CD8-positive, alpha-beta T cell (primary cell): ENCODE measurements at regions of chr10 and their contacts with region 1.

Region 1: GRCh38 chr10:78972947-78973900 is 95.5 kb upstream of the ZMIZ1 start:
- DNase-seq: peak; percentile 11 to 89 (median 68)
- ATAC-seq: peak; percentile 69
- H3K4me3 ChIP-seq: peak overlapping the region; percentile 39 to 54
- H3K4me3 Mint-ChIP-seq: peak overlapping the region; percentile 83
- H3K27ac ChIP-seq: peak overlapping the region in 1 of 2 experiments; percentile 19
- H3K27ac Mint-ChIP-seq: peak overlapping the region; percentile 80
- H3K4me1 ChIP-seq: peaks cover 14% of the 10 kb centered on the region
- H3K4me1 Mint-ChIP-seq: peaks cover 14% of the 10 kb centered on the region
- H3K27me3 ChIP-seq: no peaks in the 10 kb centered on the region
- H3K27me3 Mint-ChIP-seq: no peaks in the 10 kb centered on the region
- CTCF ChIP-seq: no peak

Region 2: DNA sequence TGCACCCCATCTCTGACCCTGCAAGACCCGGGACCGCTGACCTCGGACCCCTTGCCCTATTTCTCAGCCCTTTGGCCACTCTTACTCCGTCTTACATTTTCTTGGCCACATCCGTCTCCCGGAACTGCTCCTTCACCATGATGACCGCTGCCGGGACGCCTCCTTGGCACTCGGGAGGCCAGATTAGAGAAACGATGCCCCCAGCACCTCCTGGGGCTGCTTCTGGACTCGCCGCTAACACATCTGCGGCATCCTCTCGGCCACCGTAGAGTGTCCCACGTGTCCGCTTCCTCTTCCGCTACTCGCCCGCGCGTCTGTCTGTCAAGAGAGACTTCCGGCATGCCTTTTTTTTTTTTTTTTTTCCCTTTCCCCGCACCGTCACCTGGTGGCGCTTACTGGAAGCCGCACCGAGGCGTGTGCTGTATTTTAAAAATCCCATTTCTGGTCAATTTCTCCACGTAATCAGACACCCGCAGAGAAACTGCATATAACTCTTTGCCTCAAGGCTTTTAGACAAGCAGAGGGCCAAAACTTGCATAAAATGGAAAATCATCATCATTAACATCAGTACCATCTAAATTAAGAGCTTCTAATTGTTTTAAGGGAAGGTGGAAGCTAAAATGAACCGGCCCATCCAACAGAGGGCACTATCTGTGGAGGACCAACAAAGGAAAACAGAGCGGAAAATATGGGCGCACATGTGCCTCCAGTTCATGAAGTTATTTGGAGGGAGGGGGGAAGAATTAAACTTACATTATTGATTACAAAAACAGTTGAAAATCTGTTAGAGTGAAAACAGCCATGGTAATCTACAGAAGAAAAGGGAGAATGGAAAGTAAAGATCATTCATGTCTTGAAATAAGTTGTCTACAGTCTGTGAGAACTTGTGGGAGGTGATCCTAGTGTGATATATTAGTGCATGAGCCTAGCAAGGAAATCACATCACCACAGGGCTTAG is 943.7 kb before region 1 on chr10 and contains the start of gene POLR3A:
- CTCF ChIA-PET with region 1: no interaction called
- POLR2A ChIA-PET with region 1: no interaction called
- intact Hi-C with region 1: loop called in 1 of 2 experiments (anchors 5 kb)
- DNase-seq: peak; percentile 81 to 97 (median 90)
- ATAC-seq: peak; percentile 56
- H3K4me3 ChIP-seq: peak within 1 kb of the TSS; percentile 92 to 99
- H3K4me3 Mint-ChIP-seq: peak within 1 kb of the TSS; percentile 99
- H3K27ac ChIP-seq: peak within 1 kb of the TSS; percentile 55 to 70
- H3K27ac Mint-ChIP-seq: peak within 1 kb of the TSS; percentile 95
- H3K4me1 ChIP-seq: peaks cover 17% of the 10 kb centered on the region
- H3K4me1 Mint-ChIP-seq: peaks cover 40% of the 10 kb centered on the region
- H3K27me3 ChIP-seq: no peaks in the 10 kb centered on the region
- H3K27me3 Mint-ChIP-seq: no peaks in the 10 kb centered on the region
- CTCF ChIP-seq: peak; percentile 75
- total RNA-seq, gene POLR3A: 5.9 to 7.0 TPM

Region 3: GRCh38 chr10:78042058-78042751 is 931.0 kb before region 1 on chr10:
- CTCF ChIA-PET with region 1: no interaction called
- POLR2A ChIA-PET with region 1: no interaction called
- intact Hi-C with region 1: loop called in 1 of 2 experiments (anchors 5 kb)
- DNase-seq: no peak
- ATAC-seq: no peak
- H3K4me3 ChIP-seq: no peak overlapping the region
- H3K4me3 Mint-ChIP-seq: no peak overlapping the region
- H3K27ac ChIP-seq: no peak overlapping the region
- H3K27ac Mint-ChIP-seq: peak overlapping the region; percentile 56
- H3K4me1 ChIP-seq: peaks cover 22% of the 10 kb centered on the region
- H3K4me1 Mint-ChIP-seq: peaks cover 47% of the 10 kb centered on the region
- H3K27me3 ChIP-seq: no peaks in the 10 kb centered on the region
- H3K27me3 Mint-ChIP-seq: no peaks in the 10 kb centered on the region
- CTCF ChIP-seq: no peak

Region 4: DNA sequence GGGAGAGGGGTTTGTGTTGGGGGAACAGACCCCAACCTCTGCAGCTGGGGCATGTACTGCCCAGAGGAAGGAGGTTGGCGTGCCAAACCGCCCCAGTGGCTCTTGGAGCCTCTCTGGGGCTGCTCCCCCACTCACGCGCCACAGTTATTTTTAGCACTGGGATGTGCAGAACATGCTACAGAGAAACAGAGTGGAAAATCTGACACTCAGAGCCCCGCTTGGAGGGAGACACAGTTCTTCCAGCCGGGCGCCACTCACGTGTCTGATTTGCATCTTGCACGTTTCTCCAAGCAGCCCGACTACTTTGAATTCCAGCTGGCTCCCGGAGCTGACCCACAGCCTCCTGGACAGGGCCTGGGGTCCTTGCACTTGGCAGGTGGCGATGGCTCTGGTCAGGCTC is 757.6 kb before region 1 on chr10:
- CTCF ChIA-PET with region 1: no interaction called
- POLR2A ChIA-PET with region 1: no interaction called
- intact Hi-C with region 1: no loop called
- DNase-seq: no peak
- ATAC-seq: no peak
- H3K4me3 ChIP-seq: no peak overlapping the region
- H3K4me3 Mint-ChIP-seq: no peak overlapping the region
- H3K27ac ChIP-seq: no peak overlapping the region
- H3K27ac Mint-ChIP-seq: no peak overlapping the region
- H3K4me1 ChIP-seq: no peaks in the 10 kb centered on the region
- H3K4me1 Mint-ChIP-seq: no peaks in the 10 kb centered on the region
- H3K27me3 ChIP-seq: no peaks in the 10 kb centered on the region
- H3K27me3 Mint-ChIP-seq: peaks cover 24% of the 10 kb centered on the region
- CTCF ChIP-seq: no peak

Region 5: GRCh38 chr10:78302989-78303854 is 670.0 kb before region 1 on chr10:
- CTCF ChIA-PET with region 1: no interaction called
- POLR2A ChIA-PET with region 1: no interaction called
- intact Hi-C with region 1: loop called in 1 of 2 experiments (anchors 1 kb)
- DNase-seq: peak; percentile 94 to 99 (median 96)
- ATAC-seq: peak; percentile 92
- H3K4me3 ChIP-seq: peak overlapping the region; percentile 73 to 82
- H3K4me3 Mint-ChIP-seq: peak overlapping the region; percentile 97
- H3K27ac ChIP-seq: peak overlapping the region; percentile 76 to 92
- H3K27ac Mint-ChIP-seq: peak overlapping the region; percentile 97
- H3K4me1 ChIP-seq: peaks cover 17% of the 10 kb centered on the region
- H3K4me1 Mint-ChIP-seq: peaks cover 20% of the 10 kb centered on the region
- H3K27me3 ChIP-seq: no peaks in the 10 kb centered on the region
- H3K27me3 Mint-ChIP-seq: no peaks in the 10 kb centered on the region
- CTCF ChIP-seq: peak; percentile 79

Region 6: DNA sequence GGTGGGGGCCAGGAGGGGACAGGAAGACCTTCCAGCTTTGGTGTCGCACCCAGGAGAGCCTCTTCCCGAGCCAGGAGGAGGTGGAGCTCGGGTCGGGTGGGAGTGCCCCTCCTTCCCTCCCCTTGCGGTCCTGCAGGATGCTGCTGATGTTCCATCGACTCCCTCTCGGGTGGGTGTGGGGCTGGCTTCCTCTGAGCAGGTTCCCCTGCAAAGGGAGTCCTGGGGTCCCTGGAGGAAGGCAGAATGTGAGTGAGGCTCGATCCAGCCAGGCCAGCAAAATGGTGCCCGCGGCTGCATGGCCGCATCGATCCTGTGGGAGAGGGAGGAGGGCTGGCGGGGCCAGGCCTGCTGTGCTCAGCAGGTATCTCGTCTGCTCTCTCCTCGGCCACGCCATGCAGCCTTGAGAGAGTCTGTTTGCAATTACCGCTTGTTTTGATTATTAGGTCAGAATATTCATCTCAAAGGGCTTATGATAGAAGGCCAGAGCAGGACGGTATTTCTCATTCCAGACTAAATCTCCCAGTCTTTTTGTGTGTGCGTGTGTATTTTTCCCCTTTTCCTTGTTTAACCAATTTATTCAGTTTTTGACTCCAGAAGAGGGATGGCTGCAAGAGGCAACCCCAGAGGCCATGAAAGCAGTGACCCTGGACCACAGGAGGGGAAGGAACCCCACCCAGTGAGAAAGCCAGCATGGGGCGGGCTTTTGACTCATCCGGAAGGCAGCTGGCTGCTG is 41.7 kb before region 1 on chr10:
- CTCF ChIA-PET with region 1: no interaction called
- POLR2A ChIA-PET with region 1: no interaction called
- intact Hi-C with region 1: no loop called
- DNase-seq: no peak
- ATAC-seq: no peak
- H3K4me3 ChIP-seq: no peak overlapping the region
- H3K4me3 Mint-ChIP-seq: no peak overlapping the region
- H3K27ac ChIP-seq: no peak overlapping the region
- H3K27ac Mint-ChIP-seq: no peak overlapping the region
- H3K4me1 ChIP-seq: no peaks in the 10 kb centered on the region
- H3K4me1 Mint-ChIP-seq: no peaks in the 10 kb centered on the region
- H3K27me3 ChIP-seq: no peaks in the 10 kb centered on the region
- H3K27me3 Mint-ChIP-seq: no peaks in the 10 kb centered on the region
- CTCF ChIP-seq: no peak

Region 7: GRCh38 chr10:79001082-79001885 is 28.1 kb after region 1 on chr10:
- CTCF ChIA-PET with region 1: no interaction called
- POLR2A ChIA-PET with region 1: no interaction called
- intact Hi-C with region 1: no loop called
- DNase-seq: no peak
- ATAC-seq: no peak
- H3K4me3 ChIP-seq: no peak overlapping the region
- H3K4me3 Mint-ChIP-seq: no peak overlapping the region
- H3K27ac ChIP-seq: no peak overlapping the region
- H3K27ac Mint-ChIP-seq: no peak overlapping the region
- H3K4me1 ChIP-seq: no peaks in the 10 kb centered on the region
- H3K4me1 Mint-ChIP-seq: peaks cover 8% of the 10 kb centered on the region
- H3K27me3 ChIP-seq: no peaks in the 10 kb centered on the region
- H3K27me3 Mint-ChIP-seq: peaks cover 3% of the 10 kb centered on the region
- CTCF ChIP-seq: no peak

Region 8: DNA sequence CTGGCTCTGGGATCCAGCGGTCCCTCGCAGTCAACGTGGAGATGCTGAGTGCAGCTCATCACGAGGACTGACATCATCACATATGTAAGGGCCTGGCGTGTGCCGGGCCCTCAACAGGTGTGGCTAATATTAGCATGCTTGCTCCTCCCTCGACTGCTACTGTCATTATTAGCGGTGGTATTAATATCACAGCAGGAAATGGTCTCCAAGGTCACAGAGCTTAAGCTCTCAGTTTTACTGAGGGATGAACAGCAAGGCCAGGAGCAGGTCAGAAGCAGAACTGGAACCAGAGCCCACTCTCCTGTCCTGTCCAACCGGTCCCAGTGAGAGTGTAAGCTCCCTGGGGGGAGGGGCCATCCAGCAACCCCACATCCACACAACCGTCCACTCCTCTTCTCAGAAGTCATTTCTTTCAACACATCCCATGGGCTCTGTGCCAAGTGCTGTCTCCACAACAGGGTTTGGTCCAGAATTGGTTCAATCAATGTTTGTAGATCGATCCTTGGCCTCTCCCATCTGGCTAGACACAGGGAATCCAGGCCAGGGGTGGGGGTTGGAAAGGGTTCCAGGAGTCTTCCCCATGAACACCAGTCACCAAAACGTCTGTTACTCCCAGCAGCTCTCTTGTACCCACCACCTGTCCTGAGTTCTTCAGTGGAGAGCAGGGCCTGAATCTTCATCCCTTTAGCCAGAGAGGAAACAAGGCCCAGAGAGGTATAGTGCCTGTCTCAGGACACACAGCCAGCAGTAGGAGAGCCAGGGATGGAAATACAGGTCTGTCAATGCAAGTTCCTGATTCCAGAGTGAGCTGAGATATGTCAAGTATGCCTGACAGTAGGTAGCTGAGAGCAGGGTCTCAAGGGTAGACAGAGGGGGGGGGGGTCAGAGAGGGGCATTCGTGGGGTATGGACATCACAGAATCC is 50.3 kb after region 1 on chr10:
- CTCF ChIA-PET with region 1: interaction called, 3 read pairs
- POLR2A ChIA-PET with region 1: no interaction called
- intact Hi-C with region 1: loop called (anchors 2 to 5 kb)
- DNase-seq: peak in 1 of 9 experiments; percentile 13
- ATAC-seq: no peak
- H3K4me3 ChIP-seq: no peak overlapping the region
- H3K4me3 Mint-ChIP-seq: no peak overlapping the region
- H3K27ac ChIP-seq: no peak overlapping the region
- H3K27ac Mint-ChIP-seq: no peak overlapping the region
- H3K4me1 ChIP-seq: peaks cover 42% of the 10 kb centered on the region
- H3K4me1 Mint-ChIP-seq: peaks cover 39% of the 10 kb centered on the region
- H3K27me3 ChIP-seq: no peaks in the 10 kb centered on the region
- H3K27me3 Mint-ChIP-seq: no peaks in the 10 kb centered on the region
- CTCF ChIP-seq: no peak

Region 9: DNA sequence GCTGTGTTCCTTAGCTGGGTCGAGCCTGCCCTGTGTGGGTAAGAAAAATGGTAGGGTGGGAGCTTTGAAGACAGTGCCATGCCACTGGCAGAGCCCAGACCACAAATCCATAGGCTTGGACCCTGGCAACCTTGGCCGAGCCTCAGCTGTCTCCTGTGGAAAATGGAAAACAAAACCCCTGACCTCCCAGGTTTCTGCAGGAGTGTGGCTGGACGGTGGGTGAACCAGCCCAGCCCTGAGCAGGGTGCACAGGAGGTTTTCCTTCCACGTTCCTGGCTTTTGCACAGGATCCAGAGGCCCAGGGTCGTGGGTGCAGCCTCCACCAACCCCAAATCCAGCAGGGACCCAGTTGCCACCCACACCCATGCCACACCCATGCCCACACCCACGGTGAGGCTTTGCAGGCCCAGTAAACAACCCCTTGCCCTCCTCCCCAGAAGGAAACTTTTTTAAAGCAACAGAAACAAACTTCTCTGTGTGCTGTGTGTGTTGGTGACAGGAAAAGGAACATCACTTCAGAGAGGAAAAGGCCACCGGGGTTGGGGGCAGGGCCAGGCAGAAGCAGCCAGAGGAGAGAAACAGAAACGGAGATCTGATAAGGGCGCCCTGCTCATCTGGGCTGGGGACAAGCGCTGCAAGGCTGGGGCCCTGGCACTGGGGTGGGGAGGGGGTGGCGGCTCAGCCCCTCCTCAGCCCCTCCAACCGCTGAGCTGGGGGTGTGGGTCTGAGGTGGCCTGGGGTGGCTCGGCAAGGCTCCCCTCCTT is 74.8 kb after region 1 on chr10:
- CTCF ChIA-PET with region 1: interaction called, 7 read pairs
- POLR2A ChIA-PET with region 1: no interaction called
- intact Hi-C with region 1: loop called in 1 of 2 experiments (anchors 5 kb)
- DNase-seq: peak; percentile 22 to 82 (median 57)
- ATAC-seq: peak; percentile 78
- H3K4me3 ChIP-seq: peak overlapping the region; percentile 40 to 53
- H3K4me3 Mint-ChIP-seq: peak overlapping the region; percentile 74
- H3K27ac ChIP-seq: peak overlapping the region; percentile 49 to 79
- H3K27ac Mint-ChIP-seq: peak overlapping the region; percentile 85
- H3K4me1 ChIP-seq: peaks cover 47% of the 10 kb centered on the region
- H3K4me1 Mint-ChIP-seq: peaks cover 51% of the 10 kb centered on the region
- H3K27me3 ChIP-seq: no peaks in the 10 kb centered on the region
- H3K27me3 Mint-ChIP-seq: no peaks in the 10 kb centered on the region
- CTCF ChIP-seq: no peak

Region 10: DNA sequence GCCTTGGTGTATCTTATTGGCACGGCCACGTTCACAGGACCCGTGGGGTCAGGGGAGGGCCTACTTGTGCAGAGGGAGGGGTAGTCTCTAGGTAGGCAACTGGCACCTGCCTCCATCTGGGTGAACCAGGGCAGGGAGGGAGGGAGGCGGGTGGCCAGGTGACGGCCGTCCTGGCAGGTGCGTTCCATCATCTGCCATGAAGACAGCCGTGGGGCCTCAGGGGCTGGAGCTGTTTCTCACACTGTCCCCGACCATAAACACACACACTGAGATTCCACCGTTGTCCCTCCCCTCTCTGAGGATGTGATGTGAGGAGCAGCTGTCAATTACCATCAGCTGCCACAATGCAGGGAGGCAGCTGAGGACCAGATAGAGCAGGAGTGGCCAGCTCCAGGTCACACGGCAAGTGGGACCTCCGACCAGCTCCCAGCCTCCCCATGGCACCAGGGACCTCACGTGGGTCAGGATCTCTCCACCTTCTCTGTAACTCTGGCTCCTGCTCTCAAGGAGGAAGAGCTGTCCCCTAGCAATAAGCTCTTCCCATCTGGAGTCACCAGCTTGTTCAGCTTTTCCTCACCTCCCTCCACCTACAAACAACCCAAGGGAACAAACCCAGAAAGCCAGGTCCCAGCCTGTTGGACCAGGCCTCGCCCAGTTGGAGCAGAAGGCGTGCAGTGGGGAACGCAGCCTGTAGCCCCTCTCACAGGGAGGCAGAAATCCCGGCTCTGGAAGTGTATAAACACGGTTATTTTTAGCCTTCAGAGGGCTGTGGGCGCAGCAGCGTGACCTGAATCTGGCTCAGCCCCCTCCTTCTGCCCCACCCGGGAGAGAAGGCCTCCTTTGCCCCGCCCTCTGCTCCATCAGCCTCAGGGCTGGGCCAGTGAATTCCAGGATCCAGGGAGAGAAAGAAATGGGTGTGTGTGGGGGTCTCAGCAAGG is 128.6 kb after region 1 on chr10:
- CTCF ChIA-PET with region 1: no interaction called
- POLR2A ChIA-PET with region 1: no interaction called
- intact Hi-C with region 1: no loop called
- DNase-seq: no peak
- ATAC-seq: no peak
- H3K4me3 ChIP-seq: no peak overlapping the region
- H3K4me3 Mint-ChIP-seq: peak overlapping the region; percentile 26
- H3K27ac ChIP-seq: no peak overlapping the region
- H3K27ac Mint-ChIP-seq: no peak overlapping the region
- H3K4me1 ChIP-seq: peaks cover 25% of the 10 kb centered on the region
- H3K4me1 Mint-ChIP-seq: peaks cover 65% of the 10 kb centered on the region
- H3K27me3 ChIP-seq: no peaks in the 10 kb centered on the region
- H3K27me3 Mint-ChIP-seq: no peaks in the 10 kb centered on the region
- CTCF ChIP-seq: no peak